WTC11 (cell line): ENCODE measurements at regions of chr1 and their contacts with region 1.

Region 1: GRCh38 chr1:161098210-161099068 is at the start of gene KLHDC9:
- DNase-seq: peak; percentile 91
- ATAC-seq: peak; percentile 86
- H3K4me3 Mint-ChIP-seq: peak within 1 kb of the TSS; percentile 80
- H3K27ac Mint-ChIP-seq: peak within 1 kb of the TSS; percentile 81
- H3K4me1 Mint-ChIP-seq: peaks cover 6% of the 10 kb centered on the region
- H3K27me3 Mint-ChIP-seq: peaks cover 6% of the 10 kb centered on the region; the same call in 1 of the 2 replicates
- CTCF ChIP-seq: no peak
- total RNA-seq, gene KLHDC9: 5.8 to 8.7 TPM (median 8.7 TPM) in 3 replicates

Region 2: GRCh38 chr1:160997323-160998038 is 101.0 kb before region 1 on chr1:
- CTCF ChIA-PET with region 1: interaction called, 28 read pairs
- POLR2A ChIA-PET with region 1: interaction called, 4 read pairs
- DNase-seq: peak; percentile 64
- ATAC-seq: peak; percentile 93
- H3K4me3 Mint-ChIP-seq: no peak overlapping the region
- H3K27ac Mint-ChIP-seq: peak overlapping the region; percentile 63
- H3K4me1 Mint-ChIP-seq: peaks cover 5% of the 10 kb centered on the region
- H3K27me3 Mint-ChIP-seq: no peaks in the 10 kb centered on the region
- CTCF ChIP-seq: no peak

Region 3: DNA sequence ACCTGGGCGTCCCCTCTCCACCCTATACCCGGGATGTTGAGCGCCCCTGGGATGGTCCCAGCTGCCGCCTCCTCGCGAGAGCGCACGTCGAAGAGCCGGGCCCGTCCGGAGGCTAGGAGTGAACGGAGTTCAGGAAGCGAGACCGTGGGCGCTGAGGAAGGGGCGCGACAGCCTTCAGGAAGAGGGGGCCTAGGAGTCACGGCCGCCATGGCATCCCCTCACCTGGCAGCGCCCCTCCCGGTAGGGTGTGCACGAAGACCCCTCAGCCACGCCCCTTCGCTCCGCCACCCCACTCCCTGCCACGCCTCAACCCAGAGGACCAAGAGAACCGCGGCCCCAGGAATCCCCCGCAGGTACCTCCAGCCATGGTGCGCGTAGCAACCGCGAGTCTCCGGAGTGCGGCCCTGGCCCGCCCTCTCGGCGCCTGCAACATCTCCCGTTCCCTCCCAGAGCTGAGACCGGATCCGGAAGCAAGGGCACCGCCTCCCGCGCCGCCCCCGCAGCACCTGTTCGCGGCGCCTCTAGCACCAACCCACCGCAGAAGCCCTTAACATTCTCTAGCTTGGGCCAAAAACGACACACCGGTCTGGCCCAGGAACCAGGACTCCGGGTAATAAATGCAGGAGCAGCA is 59.8 kb before region 1 on chr1 and contains the start of gene TSTD1:
- CTCF ChIA-PET with region 1: interaction called, 16 read pairs
- POLR2A ChIA-PET with region 1: interaction called, 3 read pairs
- DNase-seq: peak; percentile 81
- ATAC-seq: peak; percentile 77
- H3K4me3 Mint-ChIP-seq: peak within 1 kb of the TSS; percentile 86
- H3K27ac Mint-ChIP-seq: peak within 1 kb of the TSS; percentile 92
- H3K4me1 Mint-ChIP-seq: peaks cover 36% of the 10 kb centered on the region
- H3K27me3 Mint-ChIP-seq: no peaks in the 10 kb centered on the region
- CTCF ChIP-seq: no peak
- total RNA-seq, gene TSTD1: 74.5 to 107 TPM (median 100 TPM) in 3 replicates

Region 4: GRCh38 chr1:161071886-161072371 is 26.5 kb before region 1 on chr1:
- CTCF ChIA-PET with region 1: interaction called, 109 read pairs
- POLR2A ChIA-PET with region 1: no interaction called
- DNase-seq: peak; percentile 72
- ATAC-seq: peak; percentile 66
- H3K4me3 Mint-ChIP-seq: no peak overlapping the region
- H3K27ac Mint-ChIP-seq: peak overlapping the region; percentile 32; the same call in 1 of the 2 replicates
- H3K4me1 Mint-ChIP-seq: peaks cover 22% of the 10 kb centered on the region
- H3K27me3 Mint-ChIP-seq: peaks cover 4% of the 10 kb centered on the region; the same call in 1 of the 2 replicates
- CTCF ChIP-seq: peak; percentile 52

Region 5: GRCh38 chr1:161132410-161133219 is 34.2 kb after region 1 on chr1 and contains the start of gene DEDD:
- CTCF ChIA-PET with region 1: interaction called, 13 read pairs
- POLR2A ChIA-PET with region 1: interaction called, 4 read pairs
- DNase-seq: peak; percentile 90
- ATAC-seq: peak; percentile 83
- H3K4me3 Mint-ChIP-seq: no peak within 1 kb of the TSS
- H3K27ac Mint-ChIP-seq: peak within 1 kb of the TSS; percentile 88
- H3K4me1 Mint-ChIP-seq: peaks cover 27% of the 10 kb centered on the region
- H3K27me3 Mint-ChIP-seq: no peaks in the 10 kb centered on the region
- CTCF ChIP-seq: no peak
- total RNA-seq, gene DEDD: 39.2 to 43.3 TPM (median 40.0 TPM) in 3 replicates